Activated naive CD4-positive, alpha-beta T cell treated with anti-CD3 and anti-CD28 coated beads for 36 hours (primary cell): ENCODE measurements at regions of chr9 and their contacts with region 1.

Region 1: DNA sequence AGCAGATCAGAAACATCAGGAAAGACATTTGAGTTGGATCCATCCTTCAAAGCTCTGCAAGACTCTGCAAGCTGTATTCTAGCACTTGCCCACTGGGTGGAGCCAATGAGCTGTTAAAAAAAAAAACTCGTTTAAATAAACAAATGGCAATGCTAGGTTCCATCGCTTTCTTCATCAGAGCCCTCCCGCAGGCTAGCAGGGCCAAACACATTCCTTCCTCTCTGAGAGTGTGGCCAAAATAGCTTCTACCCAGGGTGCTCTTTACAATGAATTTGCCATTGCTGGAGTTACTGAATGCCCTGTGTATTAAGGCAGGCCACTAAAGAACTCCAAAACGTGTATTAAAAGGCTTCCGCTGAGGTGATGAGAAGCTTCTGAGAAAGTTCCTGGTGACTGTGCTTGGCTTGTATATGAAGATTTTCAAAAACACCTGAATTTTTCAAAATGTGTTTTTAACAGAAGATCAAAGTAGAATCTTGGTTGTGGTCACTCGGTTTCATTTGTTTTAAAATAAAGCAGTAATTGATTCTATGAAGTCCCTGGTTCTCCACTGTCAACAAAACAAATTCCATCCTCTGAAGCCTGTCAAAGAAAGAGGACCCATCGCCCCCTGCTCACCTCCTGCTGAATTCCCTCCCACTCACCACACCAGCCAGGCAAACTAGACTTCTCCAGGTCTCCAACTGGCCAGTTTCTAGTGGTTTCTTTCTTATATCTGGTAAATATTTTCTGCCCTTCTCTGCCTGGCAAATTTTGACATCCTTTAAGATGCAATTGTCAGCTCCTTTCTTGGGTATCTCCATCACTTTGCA is 36.5 kb upstream of the EQTN start:
- DNase-seq: peak; percentile 65
- H3K4me3 Mint-ChIP-seq: no peak overlapping the region
- H3K27ac Mint-ChIP-seq: no peak overlapping the region
- H3K4me1 Mint-ChIP-seq: peaks cover 6% of the 10 kb centered on the region
- H3K27me3 Mint-ChIP-seq: peaks cover 2% of the 10 kb centered on the region

Region 2: DNA sequence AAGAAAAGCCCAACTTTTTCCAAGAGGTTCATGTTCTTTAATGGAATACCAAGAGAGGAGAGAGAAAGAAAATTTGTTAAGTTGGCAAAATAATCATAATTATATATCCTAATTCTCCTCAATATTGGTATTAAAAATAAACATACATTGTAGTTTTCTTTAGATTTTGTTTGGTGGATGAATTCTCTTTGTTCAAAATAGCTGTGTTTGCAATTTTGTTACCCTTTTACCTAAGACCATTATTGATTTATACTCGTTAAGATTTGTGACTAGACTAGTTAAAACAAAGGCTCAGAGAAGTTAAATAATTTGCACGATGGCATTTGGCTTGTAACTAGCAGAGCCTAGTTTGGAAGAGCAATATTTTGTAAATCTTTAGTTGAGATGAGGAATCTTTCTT is 337.6 kb before region 1 on chr9:
- CTCF ChIA-PET with region 1: no interaction called
- intact Hi-C with region 1: no loop called
- DNase-seq: no peak
- H3K4me3 Mint-ChIP-seq: no peak overlapping the region
- H3K27ac Mint-ChIP-seq: no peak overlapping the region
- H3K4me1 Mint-ChIP-seq: no peaks in the 10 kb centered on the region
- H3K27me3 Mint-ChIP-seq: no peaks in the 10 kb centered on the region

Region 3: GRCh38 chr9:27117489-27118135 is 215.8 kb before region 1 on chr9:
- CTCF ChIA-PET with region 1: no interaction called
- intact Hi-C with region 1: no loop called
- DNase-seq: no peak
- H3K4me3 Mint-ChIP-seq: no peak overlapping the region
- H3K27ac Mint-ChIP-seq: no peak overlapping the region
- H3K4me1 Mint-ChIP-seq: no peaks in the 10 kb centered on the region
- H3K27me3 Mint-ChIP-seq: peaks cover 4% of the 10 kb centered on the region

Region 4: GRCh38 chr9:27372615-27373014 is 39.2 kb after region 1 on chr9:
- CTCF ChIA-PET with region 1: no interaction called
- intact Hi-C with region 1: no loop called
- DNase-seq: no peak
- H3K4me3 Mint-ChIP-seq: no peak overlapping the region
- H3K27ac Mint-ChIP-seq: no peak overlapping the region
- H3K4me1 Mint-ChIP-seq: peaks cover 15% of the 10 kb centered on the region
- H3K27me3 Mint-ChIP-seq: peaks cover 6% of the 10 kb centered on the region

Region 5: GRCh38 chr9:27407986-27408385 is 74.5 kb after region 1 on chr9:
- CTCF ChIA-PET with region 1: no interaction called
- intact Hi-C with region 1: no loop called
- DNase-seq: no peak
- H3K4me3 Mint-ChIP-seq: no peak overlapping the region
- H3K27ac Mint-ChIP-seq: no peak overlapping the region
- H3K4me1 Mint-ChIP-seq: no peaks in the 10 kb centered on the region
- H3K27me3 Mint-ChIP-seq: no peaks in the 10 kb centered on the region

Region 6: GRCh38 chr9:27529316-27530278 is 196.2 kb after region 1 on chr9 and contains the start of gene MOB3B:
- CTCF ChIA-PET with region 1: interaction called, 41 read pairs
- intact Hi-C with region 1: loop called (anchors 1 kb)
- DNase-seq: peak; percentile 80
- H3K4me3 Mint-ChIP-seq: peak within 1 kb of the TSS; percentile 86
- H3K27ac Mint-ChIP-seq: peak within 1 kb of the TSS; percentile 86
- H3K4me1 Mint-ChIP-seq: peaks cover 10% of the 10 kb centered on the region
- H3K27me3 Mint-ChIP-seq: peaks cover 8% of the 10 kb centered on the region
- total RNA-seq, gene MOB3B: 3.0 to 3.2 TPM

Region 7: DNA sequence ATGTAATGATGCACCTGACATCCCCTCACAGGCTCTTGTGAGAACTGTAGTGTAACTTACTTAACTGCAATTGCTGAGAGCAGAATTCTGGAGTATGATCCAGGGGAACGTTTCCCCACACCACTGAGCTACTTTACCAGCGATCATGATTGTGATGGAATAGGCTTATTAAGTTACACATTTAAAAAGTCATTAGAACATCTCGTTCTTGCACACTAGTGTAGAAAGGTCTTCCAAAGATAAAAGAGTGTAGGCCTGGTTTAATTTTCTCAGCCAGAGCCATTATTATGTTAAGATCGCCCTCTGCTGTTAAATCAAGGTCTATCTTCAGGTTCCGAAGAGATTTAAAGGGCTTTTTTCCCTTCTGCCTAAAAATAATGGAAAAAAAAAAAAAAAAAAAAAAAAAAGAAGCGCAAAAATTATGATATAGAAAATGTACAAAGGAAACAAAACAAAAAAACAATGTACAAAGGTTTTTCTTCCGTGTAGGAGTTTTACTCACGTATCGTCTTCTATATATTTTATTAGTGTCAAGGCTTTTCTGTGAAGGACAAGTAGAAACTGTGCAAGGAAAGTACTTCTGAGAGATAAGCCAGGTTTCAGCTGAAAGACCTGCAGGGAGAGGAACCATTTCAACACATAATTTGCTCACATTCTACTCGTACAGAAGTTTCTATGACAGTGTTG is 214.8 kb after region 1 on chr9:
- CTCF ChIA-PET with region 1: interaction called, 31 read pairs
- intact Hi-C with region 1: loop called (anchors 1 kb)
- DNase-seq: no peak
- H3K4me3 Mint-ChIP-seq: no peak overlapping the region
- H3K27ac Mint-ChIP-seq: no peak overlapping the region
- H3K4me1 Mint-ChIP-seq: no peaks in the 10 kb centered on the region
- H3K27me3 Mint-ChIP-seq: no peaks in the 10 kb centered on the region